Calu3 (cell line): ENCODE measurements at regions of chr10 and their contacts with region 1.

Region 1: DNA sequence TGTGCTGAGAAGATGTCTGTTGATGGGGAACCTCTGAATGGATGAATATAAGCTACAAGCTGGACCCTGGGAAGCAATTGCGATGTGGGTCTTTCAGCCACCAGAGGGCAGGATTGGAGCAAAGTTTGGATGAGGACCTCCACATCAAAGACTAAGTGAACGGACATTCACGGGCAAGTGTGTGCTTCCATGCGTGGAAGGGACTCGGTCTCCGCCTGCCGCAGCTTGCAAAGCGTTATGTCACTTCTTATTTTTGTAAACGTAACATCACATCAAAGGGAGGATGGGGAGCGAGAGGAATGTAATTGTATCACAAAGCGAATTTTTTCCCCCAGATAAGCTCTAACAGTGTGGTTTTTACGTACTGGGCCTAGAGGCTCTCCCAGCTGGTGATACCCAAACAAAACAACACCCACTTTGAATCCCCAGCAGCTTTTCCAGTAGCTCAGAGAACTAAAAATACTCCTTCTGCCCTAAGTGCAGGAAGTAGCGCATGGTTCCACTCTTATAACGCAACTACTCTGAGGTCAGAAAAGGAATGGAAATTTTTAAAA is 65.0 kb downstream of the VWA2 start:
- DNase-seq: peak; percentile 74
- H3K4me3 Mint-ChIP-seq: peak overlapping the region; percentile 51
- H3K27ac Mint-ChIP-seq: no peak overlapping the region
- H3K4me1 Mint-ChIP-seq: no peaks in the 10 kb centered on the region
- H3K27me3 Mint-ChIP-seq: no peaks in the 10 kb centered on the region
- CTCF ChIP-seq: peak; percentile 45

Region 2: GRCh38 chr10:114420811-114421485 is 116.9 kb after region 1 on chr10:
- CTCF ChIA-PET with region 1: interaction called, 11 read pairs
- intact Hi-C with region 1: loop called (anchors 5 kb)
- DNase-seq: no peak
- H3K4me3 Mint-ChIP-seq: no peak overlapping the region
- H3K27ac Mint-ChIP-seq: no peak overlapping the region
- H3K4me1 Mint-ChIP-seq: no peaks in the 10 kb centered on the region
- H3K27me3 Mint-ChIP-seq: no peaks in the 10 kb centered on the region
- CTCF ChIP-seq: no peak

Region 3: DNA sequence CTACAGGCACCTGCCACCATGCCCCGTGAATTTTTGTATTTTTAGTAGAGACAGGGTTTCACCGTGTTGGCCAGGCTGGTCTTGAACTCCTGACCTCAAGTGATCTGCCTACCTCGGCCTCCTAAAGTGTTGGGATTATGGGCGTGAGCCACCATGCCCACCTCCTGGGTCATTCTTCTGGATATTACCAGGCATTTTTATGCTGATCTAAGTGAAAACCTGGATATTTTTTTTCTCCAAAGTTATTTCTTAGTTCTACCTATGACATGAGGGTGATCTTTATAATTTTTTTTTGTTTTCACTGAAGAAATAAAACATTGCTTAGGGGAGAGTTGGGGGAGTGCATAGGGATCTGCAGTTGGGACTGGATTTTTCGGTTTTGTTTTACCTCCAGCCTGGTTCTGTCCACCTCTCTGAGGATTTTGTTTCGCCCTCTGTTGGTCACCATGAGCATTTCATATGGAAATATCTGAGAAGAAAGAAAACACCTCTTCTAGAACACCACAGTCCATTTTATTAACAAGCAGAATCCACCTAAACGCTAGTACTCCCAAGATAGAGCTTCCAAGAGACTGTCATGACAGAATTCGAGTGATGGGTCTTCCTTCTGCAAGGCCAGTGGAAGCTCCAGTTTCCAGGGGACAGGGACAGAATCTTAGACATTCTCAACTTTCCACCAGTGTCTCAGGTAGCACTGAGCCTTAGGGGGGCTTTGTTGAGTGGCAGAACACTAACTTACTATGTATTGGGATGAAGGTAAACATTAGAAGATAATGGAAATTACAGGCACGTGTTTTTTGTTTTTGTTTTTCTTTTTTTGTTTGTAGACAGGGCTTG is 133.6 kb after region 1 on chr10:
- CTCF ChIA-PET with region 1: interaction called, 11 read pairs
- intact Hi-C with region 1: loop called (anchors 1 kb)
- DNase-seq: peak; percentile 6
- H3K4me3 Mint-ChIP-seq: no peak overlapping the region
- H3K27ac Mint-ChIP-seq: no peak overlapping the region
- H3K4me1 Mint-ChIP-seq: no peaks in the 10 kb centered on the region
- H3K27me3 Mint-ChIP-seq: no peaks in the 10 kb centered on the region
- CTCF ChIP-seq: no peak

Region 4: GRCh38 chr10:114550756-114551635 is 246.9 kb after region 1 on chr10:
- CTCF ChIA-PET with region 1: interaction called, 13 read pairs
- intact Hi-C with region 1: no loop called
- DNase-seq: no peak
- H3K4me3 Mint-ChIP-seq: no peak overlapping the region
- H3K27ac Mint-ChIP-seq: no peak overlapping the region
- H3K4me1 Mint-ChIP-seq: peaks cover 18% of the 10 kb centered on the region
- H3K27me3 Mint-ChIP-seq: no peaks in the 10 kb centered on the region
- CTCF ChIP-seq: no peak

Region 5: GRCh38 chr10:115129752-115130151 is 825.7 kb after region 1 on chr10:
- CTCF ChIA-PET with region 1: no interaction called
- intact Hi-C with region 1: loop called (anchors 5 kb)
- DNase-seq: no peak
- H3K4me3 Mint-ChIP-seq: no peak overlapping the region
- H3K27ac Mint-ChIP-seq: no peak overlapping the region
- H3K4me1 Mint-ChIP-seq: no peaks in the 10 kb centered on the region
- H3K27me3 Mint-ChIP-seq: no peaks in the 10 kb centered on the region
- CTCF ChIP-seq: no peak